Pancreas (tissue), 10 donors: ENCODE measurements at regions of chr17 and their contacts with region 1.

Region 1: GRCh38 chr17:66364990-66365490 is 62.6 kb downstream of the PRKCA start:
- DNase-seq: no peak
- ATAC-seq: no peak
- H3K4me3 ChIP-seq: no peak overlapping the region
- H3K27ac ChIP-seq: no peak overlapping the region
- H3K4me1 ChIP-seq: no peaks in the 10 kb centered on the region
- H3K27me3 ChIP-seq: no peaks in the 10 kb centered on the region
- CTCF ChIP-seq: no peak

Region 2: GRCh38 chr17:66255112-66255511 is 109.9 kb before region 1 on chr17:
- intact Hi-C with region 1: loop called in 1 of 3 experiments (anchors 5 kb)
- DNase-seq: peak in 2 of 6 donors; percentile 16 to 29
- ATAC-seq: peak; percentile 72 to 97 (median 96)
- H3K4me3 ChIP-seq: no peak overlapping the region
- H3K27ac ChIP-seq: no peak overlapping the region
- H3K4me1 ChIP-seq: peaks cover 0 to 4% (median 0%) of the 10 kb centered on the region in 3 donors
- H3K27me3 ChIP-seq: no peaks in the 10 kb centered on the region
- CTCF ChIP-seq: peak in 3 of 4 donors; percentile 42 to 66 (median 44)